ENCODE measurements at regions of chr13 and their contacts with region 1.

Region 1: GRCh38 chr13:30114571-30115256 is 192.6 kb downstream of the KATNAL1 start:
- DNase-seq: no peak
- H3K4me3 ChIP-seq: peak overlapping the region; percentile 45 to 46
- H3K27ac ChIP-seq: peak overlapping the region; percentile 89
- H3K4me1 ChIP-seq: peaks cover 51% of the 10 kb centered on the region
- H3K27me3 ChIP-seq: peaks cover 5% of the 10 kb centered on the region
- CTCF ChIP-seq: peak; percentile 80 to 95 (median 92)
- POLR2A ChIP-seq: peak in 1 of 2 donors; percentile 44

Region 2: GRCh38 chr13:28942906-28943305 is 1171.8 kb before region 1 on chr13:
- intact Hi-C with region 1: no loop called
- DNase-seq: no peak
- H3K4me3 ChIP-seq: no peak overlapping the region
- H3K27ac ChIP-seq: no peak overlapping the region
- H3K4me1 ChIP-seq: no peaks in the 10 kb centered on the region
- H3K27me3 ChIP-seq: no peaks in the 10 kb centered on the region
- CTCF ChIP-seq: no peak
- POLR2A ChIP-seq: no peak

Region 3: GRCh38 chr13:29508130-29508875 is 606.4 kb before region 1 on chr13:
- intact Hi-C with region 1: loop called (anchors 5 kb)
- DNase-seq: no peak
- H3K4me3 ChIP-seq: no peak overlapping the region
- H3K27ac ChIP-seq: peak overlapping the region; percentile 63
- H3K4me1 ChIP-seq: peaks cover 37% of the 10 kb centered on the region
- H3K27me3 ChIP-seq: no peaks in the 10 kb centered on the region
- CTCF ChIP-seq: peak; percentile 64 to 92 (median 90)
- POLR2A ChIP-seq: no peak

Region 4: DNA sequence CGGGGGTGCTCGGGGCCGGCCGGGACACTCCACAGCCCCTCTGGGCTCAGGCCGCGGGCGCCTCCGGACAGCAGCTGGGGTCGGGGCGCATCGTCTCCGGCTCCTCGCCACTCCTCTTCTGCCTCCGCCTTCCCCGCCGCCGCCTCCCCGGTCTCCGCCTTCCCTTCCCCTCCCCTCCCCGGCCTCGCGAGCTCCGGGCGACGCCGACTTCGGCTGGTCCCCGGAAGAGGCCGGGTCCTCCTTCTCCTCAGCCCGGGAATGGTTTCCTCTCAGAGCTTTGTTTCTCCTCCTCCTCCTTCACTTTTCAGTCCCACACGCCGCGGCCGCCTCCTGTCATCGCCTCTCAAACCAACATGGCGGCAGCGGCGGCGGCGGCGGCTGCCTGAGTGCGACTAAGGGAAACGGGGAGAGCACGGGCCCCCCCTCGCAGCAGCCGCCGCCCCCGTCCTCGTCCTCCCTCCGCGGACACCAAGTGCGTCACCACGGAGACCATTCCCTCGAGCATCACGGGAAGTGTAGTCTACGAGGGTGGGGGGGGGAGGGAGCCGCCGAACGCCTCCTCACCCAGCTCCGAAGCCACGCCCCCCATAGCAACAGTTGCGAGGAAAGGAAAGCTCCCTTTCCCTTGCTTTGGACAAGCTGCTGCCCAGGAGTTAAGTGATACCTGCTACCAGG is 264.4 kb before region 1 on chr13 and contains the start of gene UBL3:
- intact Hi-C with region 1: loop called (anchors 10 kb)
- DNase-seq: peak in 1 of 2 donors; percentile 99
- H3K4me3 ChIP-seq: peak within 1 kb of the TSS; percentile 78 to 83
- H3K27ac ChIP-seq: peak within 1 kb of the TSS; percentile 98
- H3K4me1 ChIP-seq: peaks cover 6% of the 10 kb centered on the region
- H3K27me3 ChIP-seq: no peaks in the 10 kb centered on the region
- CTCF ChIP-seq: no peak
- POLR2A ChIP-seq: peak in 1 of 2 donors; percentile 88
- total RNA-seq, gene UBL3: 33.4 TPM